ENCODE measurements at regions of chr1 and their contacts with region 1.

Region 1: DNA sequence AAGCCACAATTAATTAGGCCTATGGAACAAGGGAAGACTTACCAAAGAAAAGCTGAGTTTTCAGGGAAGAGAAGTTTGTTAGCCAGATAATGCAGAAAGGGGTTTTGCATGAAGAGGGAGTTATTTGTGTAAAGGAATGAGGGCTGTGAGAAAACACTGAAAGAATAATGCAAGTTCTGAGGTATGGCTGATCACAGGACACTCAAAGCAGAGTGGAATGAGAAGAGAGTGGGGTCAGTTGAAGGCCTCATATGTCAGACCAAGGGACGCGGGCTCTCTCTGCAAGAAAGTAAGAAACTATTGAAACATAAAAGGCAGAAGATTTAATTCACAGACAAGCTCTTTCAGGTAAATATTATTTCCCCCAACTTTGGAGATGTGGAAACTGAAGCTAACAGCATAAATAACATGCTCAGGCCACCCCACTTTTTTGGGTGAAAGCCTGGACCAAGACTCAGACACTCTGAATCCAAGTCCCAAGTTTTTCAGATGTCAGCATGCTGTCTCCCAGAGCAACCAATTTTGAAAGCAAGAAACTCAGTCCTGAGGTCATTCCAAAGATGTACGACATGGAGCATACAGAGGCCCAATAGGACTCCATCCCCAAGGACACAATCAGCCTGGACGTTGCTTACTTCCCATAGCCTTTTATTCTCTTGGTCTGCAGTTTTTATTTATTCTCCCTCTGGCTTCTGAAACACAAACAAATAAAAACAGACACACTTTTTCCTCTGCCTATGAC is 47.3 kb upstream of the FGGY start:
- DNase-seq: no peak
- ATAC-seq: peak in 1 of 4 donors; percentile 42
- H3K4me3 ChIP-seq: no peak overlapping the region
- H3K27ac ChIP-seq: peak overlapping the region; percentile 30
- H3K4me1 ChIP-seq: no peaks in the 10 kb centered on the region
- H3K27me3 ChIP-seq: no peaks in the 10 kb centered on the region
- CTCF ChIP-seq: no peak

Region 2: DNA sequence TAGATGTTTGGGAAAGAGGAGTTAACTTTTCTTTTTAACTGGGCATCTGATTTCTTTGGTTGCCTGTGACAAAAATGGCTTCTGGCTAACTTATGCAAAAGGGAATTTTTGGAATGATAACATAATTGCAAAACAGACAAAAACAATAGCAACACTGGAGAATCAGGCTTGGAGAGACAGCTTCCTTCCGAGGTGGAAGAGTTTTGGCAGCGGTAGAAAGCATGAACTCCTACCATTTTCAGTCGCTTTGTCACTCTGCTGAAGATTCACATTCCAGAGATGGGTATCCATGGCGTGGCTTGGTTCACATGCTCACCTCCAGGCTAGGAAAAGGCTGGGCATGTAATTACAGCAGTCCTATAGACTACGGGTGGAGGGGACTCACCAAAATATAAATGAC is 30.1 kb after region 1 on chr1:
- intact Hi-C with region 1: loop called in 1 of 2 experiments (anchors 5 kb)
- DNase-seq: no peak
- ATAC-seq: no peak
- H3K4me3 ChIP-seq: no peak overlapping the region
- H3K27ac ChIP-seq: no peak overlapping the region
- H3K4me1 ChIP-seq: no peaks in the 10 kb centered on the region
- H3K27me3 ChIP-seq: no peaks in the 10 kb centered on the region
- CTCF ChIP-seq: no peak

Measured in psoas muscle (tissue), 8 donors.